PC-9 (cell line): ENCODE measurements at regions of chr13 and their contacts with region 1.

Region 1: DNA sequence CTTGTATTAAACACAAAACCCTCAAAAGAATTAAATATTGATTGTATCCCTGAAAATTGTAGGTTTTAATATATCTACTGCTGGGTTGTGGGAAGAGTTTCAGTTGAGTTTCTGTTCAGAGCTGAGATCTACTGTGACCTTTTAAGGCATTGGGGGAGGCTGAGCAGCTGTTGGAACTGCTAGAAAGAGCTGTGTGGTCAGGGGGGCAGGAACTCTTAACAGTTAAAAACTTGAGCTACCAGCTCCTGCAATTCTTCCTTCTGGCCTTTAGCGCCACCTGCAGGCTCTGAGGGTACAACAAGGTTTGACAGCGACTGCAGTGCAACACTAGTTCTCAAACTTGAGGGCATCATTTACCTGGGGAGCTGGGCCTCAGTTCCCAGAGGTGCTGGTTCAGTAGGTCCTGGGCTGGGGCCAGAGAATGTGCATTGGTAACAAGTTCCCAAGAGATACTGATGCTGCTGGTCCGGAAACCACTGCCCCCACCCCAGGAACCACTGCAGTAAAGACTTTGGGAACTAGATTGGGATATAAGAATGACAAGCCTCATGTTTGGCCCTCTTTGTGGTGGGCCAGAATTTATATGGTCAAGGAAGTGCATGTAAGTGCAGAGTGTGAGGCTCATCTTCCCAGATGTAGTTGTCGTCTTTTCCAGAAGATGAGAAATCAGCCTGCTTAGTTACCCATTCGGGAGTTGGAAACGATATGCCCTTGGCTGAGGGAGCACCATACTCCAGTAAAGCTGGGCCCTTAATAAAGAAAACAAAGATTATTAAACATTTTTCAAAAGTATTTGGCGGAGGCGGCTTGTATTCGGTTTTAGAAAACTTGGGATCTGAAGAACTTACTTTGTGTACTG is 2.6 kb downstream of the RNASEH2B start:
- DNase-seq: peak; percentile 64 to 75
- H3K4me3 ChIP-seq: peak overlapping the region; percentile 96; the same call in 1 of the 2 replicates
- H3K27ac ChIP-seq: no peak overlapping the region
- H3K4me1 ChIP-seq: peaks cover 17% of the 10 kb centered on the region
- H3K27me3 ChIP-seq: no peaks in the 10 kb centered on the region
- CTCF ChIP-seq: peak; percentile 92

Region 2: DNA sequence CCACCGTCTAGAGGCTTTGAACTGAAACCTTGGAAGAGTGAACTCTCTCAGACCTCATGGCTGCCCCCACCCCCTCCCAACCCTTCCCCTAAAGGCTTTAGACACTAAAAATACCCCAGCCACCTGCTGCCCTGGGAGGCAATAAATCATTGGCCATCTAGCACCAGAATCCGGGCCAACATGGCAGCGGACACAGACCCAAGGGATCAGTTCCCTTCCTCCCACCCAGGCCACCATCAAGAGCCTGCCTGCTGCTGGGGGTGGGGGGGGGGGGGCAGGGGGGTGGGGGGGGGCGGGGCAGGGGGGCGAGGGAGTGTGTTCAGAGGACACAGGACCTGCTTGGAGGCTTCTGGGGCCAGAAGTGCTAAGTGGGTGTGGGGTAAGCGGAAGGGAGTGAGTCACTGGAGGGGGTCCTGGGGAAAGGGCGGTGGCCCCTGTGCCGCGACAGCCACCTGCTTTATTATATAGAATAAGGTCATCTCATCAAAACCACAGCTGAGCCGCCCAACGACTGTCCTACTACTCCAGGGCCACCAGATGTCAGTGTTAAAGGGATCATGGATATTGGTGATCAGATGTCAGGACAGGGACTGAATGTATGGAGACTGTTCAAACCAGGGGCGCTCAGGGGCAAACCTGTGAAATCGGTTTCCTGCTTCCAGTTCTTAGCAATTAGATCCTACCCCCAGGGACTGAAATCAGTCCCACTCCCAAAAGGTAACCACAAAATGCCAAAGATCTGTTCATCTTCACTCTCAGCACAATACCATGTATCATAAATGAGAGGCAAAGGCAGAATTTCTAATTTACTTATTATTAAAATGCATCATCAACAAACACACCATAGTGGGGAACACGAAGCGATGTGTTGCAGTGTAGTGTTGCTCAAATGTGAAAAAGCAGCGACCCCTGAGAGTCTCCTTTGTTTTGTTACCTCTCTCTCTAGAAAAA is 1259.5 kb before region 1 on chr13:
- CTCF ChIA-PET with region 1: no interaction called
- POLR2A ChIA-PET with region 1: no interaction called
- intact Hi-C with region 1: loop called (anchors 2 kb)
- DNase-seq: peak; percentile 39 to 57
- H3K4me3 ChIP-seq: no peak overlapping the region
- H3K27ac ChIP-seq: no peak overlapping the region
- H3K4me1 ChIP-seq: no peaks in the 10 kb centered on the region
- H3K27me3 ChIP-seq: no peaks in the 10 kb centered on the region
- CTCF ChIP-seq: peak; percentile 71

Region 3: GRCh38 chr13:49976314-49977258 is 935.6 kb before region 1 on chr13:
- CTCF ChIA-PET with region 1: interaction called, 5 read pairs
- POLR2A ChIA-PET with region 1: interaction called, 4 read pairs
- intact Hi-C with region 1: loop called (anchors 1 kb)
- DNase-seq: peak; percentile 58
- H3K4me3 ChIP-seq: no peak overlapping the region
- H3K27ac ChIP-seq: no peak overlapping the region
- H3K4me1 ChIP-seq: no peaks in the 10 kb centered on the region
- H3K27me3 ChIP-seq: no peaks in the 10 kb centered on the region
- CTCF ChIP-seq: peak; percentile 94

Region 4: DNA sequence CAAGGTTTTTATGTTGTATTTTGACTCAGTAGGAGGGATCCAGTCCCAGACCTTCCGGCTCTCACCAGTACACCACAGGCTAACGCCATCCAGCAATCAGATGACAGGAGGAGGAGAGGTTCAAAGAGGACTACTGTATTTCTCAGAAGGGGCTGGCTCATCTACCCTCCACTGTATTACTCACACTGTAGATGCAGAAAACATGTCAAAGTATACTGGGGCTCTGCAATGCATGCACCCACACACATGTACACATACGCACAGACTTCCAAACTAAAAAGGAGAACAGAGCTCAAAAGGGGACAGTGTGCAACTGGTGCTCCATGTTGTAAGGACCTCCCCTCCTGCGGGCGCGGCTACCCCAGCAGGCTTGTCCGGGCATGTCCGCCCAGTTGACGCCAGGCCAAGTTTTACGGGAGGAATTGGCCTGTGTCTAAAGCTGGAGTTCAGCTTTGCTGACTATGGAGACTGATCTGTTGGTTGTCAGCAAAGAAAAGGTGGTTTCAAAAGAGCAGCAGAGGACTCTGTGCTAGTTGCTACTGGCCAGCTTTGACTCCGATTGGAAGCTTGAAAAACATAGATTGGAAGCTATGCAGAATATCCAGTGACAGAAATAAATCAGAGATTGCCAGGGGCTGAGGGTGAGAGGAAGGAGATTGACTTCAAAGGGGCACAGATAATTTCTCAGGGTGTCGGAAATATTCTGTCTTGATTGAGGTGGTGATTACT is 382.8 kb before region 1 on chr13:
- CTCF ChIA-PET with region 1: no interaction called
- POLR2A ChIA-PET with region 1: no interaction called
- intact Hi-C with region 1: loop called (anchors 10 kb)
- DNase-seq: peak in 1 of 2 experiments; percentile 67
- H3K4me3 ChIP-seq: no peak overlapping the region
- H3K27ac ChIP-seq: no peak overlapping the region
- H3K4me1 ChIP-seq: no peaks in the 10 kb centered on the region
- H3K27me3 ChIP-seq: no peaks in the 10 kb centered on the region
- CTCF ChIP-seq: no peak

Region 5: GRCh38 chr13:50801087-50801931 is 110.9 kb before region 1 on chr13:
- CTCF ChIA-PET with region 1: no interaction called
- POLR2A ChIA-PET with region 1: no interaction called
- intact Hi-C with region 1: loop called (anchors 5 kb)
- DNase-seq: peak in 1 of 2 experiments; percentile 47
- H3K4me3 ChIP-seq: no peak overlapping the region
- H3K27ac ChIP-seq: no peak overlapping the region
- H3K4me1 ChIP-seq: peaks cover 6% of the 10 kb centered on the region; the same call in 1 of the 2 replicates
- H3K27me3 ChIP-seq: no peaks in the 10 kb centered on the region
- CTCF ChIP-seq: peak; percentile 76

Region 6: DNA sequence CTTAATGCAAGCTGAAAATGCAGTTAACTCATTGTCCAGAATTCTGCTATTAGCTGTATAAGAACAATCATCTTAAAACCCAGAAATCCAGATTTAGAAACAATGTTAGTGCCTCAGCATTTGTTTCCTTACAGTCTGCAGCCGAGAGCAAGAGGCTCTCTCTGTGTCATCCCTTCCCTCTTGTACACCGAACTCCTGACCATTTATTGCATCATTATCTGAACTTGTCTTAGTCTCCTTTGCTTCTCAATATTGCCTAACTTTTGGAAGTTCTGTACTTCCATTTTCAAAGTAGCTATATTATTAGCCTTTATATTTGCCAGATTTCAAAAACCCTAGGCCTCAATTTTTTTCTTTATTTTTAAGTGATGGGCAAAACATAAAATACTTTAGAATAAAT is 24.5 kb after region 1 on chr13:
- CTCF ChIA-PET with region 1: no interaction called
- POLR2A ChIA-PET with region 1: no interaction called
- intact Hi-C with region 1: no loop called
- DNase-seq: no peak
- H3K4me3 ChIP-seq: no peak overlapping the region
- H3K27ac ChIP-seq: no peak overlapping the region
- H3K4me1 ChIP-seq: no peaks in the 10 kb centered on the region
- H3K27me3 ChIP-seq: no peaks in the 10 kb centered on the region
- CTCF ChIP-seq: no peak